Activated T-helper 1 cell treated with anti-CD3 and anti-CD28 coated beads, Interleukin-12 subunit alpha, Interleukin-12 subunit beta, Interleukin-2, Interleukin-4 antibody, amounts not matched to agents 30 ng/mL and 10 ng/mL and 1 ng/mL, durations not matched to agents 14 hours and 24 hours and 36 hours (primary cell): ENCODE measurements at regions of chr11 and their contacts with region 1.

Region 1: DNA sequence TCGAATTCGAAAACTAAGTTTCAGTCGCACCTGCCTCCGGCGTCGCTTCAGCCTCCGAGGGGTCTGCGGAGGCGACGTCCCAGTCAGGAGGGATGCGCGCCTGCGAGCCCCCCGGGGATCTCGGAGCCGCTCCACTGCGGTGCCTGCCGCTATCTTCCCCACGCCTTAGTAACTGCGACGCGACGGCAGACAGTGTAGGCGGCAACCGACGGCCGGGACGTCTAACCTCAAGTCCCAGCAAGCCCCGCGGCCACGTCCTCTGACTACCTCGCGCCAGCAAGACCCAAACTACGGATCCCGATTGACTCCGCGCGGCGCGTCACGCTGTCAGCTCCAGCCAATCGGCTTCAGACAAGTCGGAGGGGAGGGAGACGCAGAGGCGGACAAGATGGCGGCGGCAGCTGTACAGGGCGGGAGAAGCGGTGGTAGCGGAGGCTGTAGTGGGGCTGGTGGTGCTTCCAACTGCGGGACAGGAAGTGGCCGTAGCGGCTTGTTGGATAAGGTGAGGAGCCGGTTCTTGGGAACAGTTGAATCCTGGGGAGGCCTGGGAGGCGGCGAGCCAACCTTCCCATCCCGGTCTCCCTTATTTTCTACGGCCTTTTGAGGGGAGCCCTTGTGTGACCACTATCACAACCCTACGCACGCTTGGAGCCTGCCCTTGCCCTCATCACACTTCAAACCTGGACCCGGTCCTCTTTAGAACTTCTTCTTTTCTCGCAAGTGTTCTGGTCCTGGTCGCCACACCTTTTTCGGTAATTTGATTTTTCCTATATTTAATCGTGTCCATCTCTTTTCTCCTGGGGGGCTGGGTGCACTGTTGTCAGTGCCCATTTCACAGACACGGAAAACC is at the starts of genes SPCS2 and XRRA1:
- DNase-seq: peak; percentile 98
- H3K4me3 Mint-ChIP-seq: peak within 1 kb of the TSS; percentile 96
- H3K27ac Mint-ChIP-seq: peak within 1 kb of the TSS; percentile 96
- H3K4me1 Mint-ChIP-seq: peaks cover 46% of the 10 kb centered on the region
- H3K27me3 Mint-ChIP-seq: no peaks in the 10 kb centered on the region
- total RNA-seq, gene SPCS2: 167 and 172 TPM in 2 replicates
- total RNA-seq, gene XRRA1: 8.6 and 9.0 TPM in 2 replicates

Region 2: GRCh38 chr11:73760679-73761402 is 1188.3 kb before region 1 on chr11 and contains the start of gene RAB6A:
- intact Hi-C with region 1: loop called (anchors 10 kb)
- DNase-seq: peak; percentile 100
- H3K4me3 Mint-ChIP-seq: peak within 1 kb of the TSS; percentile 98
- H3K27ac Mint-ChIP-seq: peak within 1 kb of the TSS; percentile 97
- H3K4me1 Mint-ChIP-seq: peaks cover 41% of the 10 kb centered on the region
- H3K27me3 Mint-ChIP-seq: peaks cover 3% of the 10 kb centered on the region
- total RNA-seq, gene RAB6A: 81.9 and 88.0 TPM in 2 replicates

Region 3: DNA sequence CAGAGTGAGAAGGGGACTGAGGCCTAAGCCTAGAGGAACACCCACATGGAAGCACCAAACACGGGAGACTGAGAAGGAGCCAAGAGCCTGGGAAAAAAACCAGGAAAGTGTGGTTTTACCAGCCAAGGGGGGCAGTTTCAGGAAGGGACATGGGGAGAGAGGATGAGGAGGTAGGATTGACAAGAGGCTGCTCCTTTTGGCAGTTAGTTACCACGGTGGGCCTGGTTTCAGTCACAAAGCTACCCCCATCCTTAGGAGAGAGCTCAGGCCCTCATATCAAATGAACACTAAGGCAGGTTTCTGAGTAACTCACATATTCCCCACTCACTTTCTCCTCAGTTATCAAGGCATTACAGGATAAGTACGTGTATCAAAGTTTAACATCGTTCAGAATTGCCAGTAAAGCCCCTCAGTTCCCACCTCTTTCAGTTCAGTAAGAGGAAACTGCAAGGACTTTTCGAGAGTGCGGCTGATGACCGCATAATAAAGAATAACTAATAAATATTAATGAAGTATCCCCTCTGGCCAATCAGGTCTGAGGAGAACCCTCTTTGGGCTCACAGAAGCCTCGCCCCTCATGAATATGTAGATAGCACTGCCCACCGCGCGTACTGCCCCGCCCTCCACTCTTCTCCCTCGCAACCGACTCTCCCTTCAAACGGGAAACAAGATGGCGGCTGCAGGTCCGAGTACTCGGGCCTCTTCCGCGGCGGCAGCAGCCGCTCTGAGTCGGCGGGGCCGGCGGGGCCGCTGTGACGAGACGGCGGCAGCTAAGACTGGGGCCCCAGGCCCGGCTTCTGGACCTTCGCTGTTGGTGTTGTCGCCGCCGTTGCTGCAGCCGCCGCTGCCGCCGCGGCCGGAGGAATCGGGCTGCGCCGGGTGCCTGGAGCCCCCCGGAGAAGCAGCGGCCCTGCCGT is 200.7 kb before region 1 on chr11 and contains the start of gene RNF169:
- intact Hi-C with region 1: loop called (anchors 1 kb)
- DNase-seq: peak; percentile 85
- H3K4me3 Mint-ChIP-seq: peak within 1 kb of the TSS; percentile 98
- H3K27ac Mint-ChIP-seq: peak within 1 kb of the TSS; percentile 90
- H3K4me1 Mint-ChIP-seq: peaks cover 30% of the 10 kb centered on the region
- H3K27me3 Mint-ChIP-seq: peaks cover 4% of the 10 kb centered on the region
- total RNA-seq, gene RNF169: 14.8 and 15.3 TPM in 2 replicates

Region 4: DNA sequence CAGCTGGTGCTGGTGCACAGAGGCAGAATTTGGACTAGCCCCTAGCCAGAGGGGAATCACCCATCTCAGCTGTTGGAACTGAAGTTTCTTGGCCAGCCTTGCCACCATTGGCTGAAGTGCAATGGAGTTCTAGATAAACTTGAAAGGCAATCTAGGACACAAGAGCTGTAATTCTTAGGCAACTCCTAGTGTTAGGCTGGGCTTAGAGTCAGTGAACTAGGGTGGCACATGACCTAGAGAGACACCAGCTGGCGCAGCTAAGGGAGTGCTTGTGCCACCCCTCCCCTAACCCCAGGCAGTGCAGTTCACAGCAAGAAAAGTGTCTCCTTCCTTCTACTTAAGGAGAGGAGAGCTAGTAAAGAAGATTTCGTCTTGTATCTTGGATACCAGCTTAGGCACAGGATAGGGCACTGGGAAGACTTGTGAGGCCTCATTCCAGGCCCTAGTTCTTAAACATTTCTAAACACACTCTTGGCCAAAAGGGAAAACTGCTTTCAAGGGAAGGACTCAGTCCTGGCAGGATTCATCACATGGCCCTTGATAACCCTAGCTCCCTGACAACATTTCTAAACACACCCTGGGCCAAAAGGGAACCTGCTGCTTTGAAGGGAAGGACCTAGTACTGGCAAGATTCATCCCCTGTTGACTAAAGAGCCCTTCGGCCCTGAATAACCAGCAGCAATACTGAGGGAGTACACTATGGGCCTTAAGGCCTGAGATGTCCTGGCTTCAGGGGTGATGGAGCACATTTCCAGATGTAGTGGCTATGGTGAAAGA is 53.6 kb before region 1 on chr11:
- intact Hi-C with region 1: no loop called
- DNase-seq: no peak
- H3K4me3 Mint-ChIP-seq: no peak overlapping the region
- H3K27ac Mint-ChIP-seq: no peak overlapping the region
- H3K4me1 Mint-ChIP-seq: no peaks in the 10 kb centered on the region
- H3K27me3 Mint-ChIP-seq: no peaks in the 10 kb centered on the region

Region 5: GRCh38 chr11:74971424-74971823 is 22.3 kb after region 1 on chr11:
- intact Hi-C with region 1: loop called (anchors 2 kb)
- DNase-seq: no peak
- H3K4me3 Mint-ChIP-seq: no peak overlapping the region
- H3K27ac Mint-ChIP-seq: no peak overlapping the region
- H3K4me1 Mint-ChIP-seq: peaks cover 9% of the 10 kb centered on the region
- H3K27me3 Mint-ChIP-seq: no peaks in the 10 kb centered on the region

Region 6: DNA sequence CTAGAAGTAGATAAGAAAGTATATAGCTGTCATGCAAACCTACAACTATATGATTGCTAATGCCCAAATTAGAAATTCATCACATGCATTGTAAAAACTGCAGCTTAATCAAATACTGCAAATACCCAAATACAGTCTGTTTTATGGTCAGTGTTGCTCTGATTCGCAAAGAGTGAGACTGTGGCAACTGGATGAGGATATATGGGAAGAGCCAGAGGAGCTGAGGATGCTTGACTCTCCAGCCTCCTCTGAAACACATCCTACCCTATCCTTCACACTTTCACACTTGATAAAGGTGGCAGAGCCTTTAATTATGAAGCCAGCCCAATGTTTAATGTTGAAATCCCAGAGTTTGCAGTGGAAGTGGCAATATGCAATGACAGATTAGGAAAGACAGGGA is 169.5 kb after region 1 on chr11:
- intact Hi-C with region 1: no loop called
- DNase-seq: no peak
- H3K4me3 Mint-ChIP-seq: no peak overlapping the region
- H3K27ac Mint-ChIP-seq: no peak overlapping the region
- H3K4me1 Mint-ChIP-seq: no peaks in the 10 kb centered on the region
- H3K27me3 Mint-ChIP-seq: peaks cover 6% of the 10 kb centered on the region

Region 7: DNA sequence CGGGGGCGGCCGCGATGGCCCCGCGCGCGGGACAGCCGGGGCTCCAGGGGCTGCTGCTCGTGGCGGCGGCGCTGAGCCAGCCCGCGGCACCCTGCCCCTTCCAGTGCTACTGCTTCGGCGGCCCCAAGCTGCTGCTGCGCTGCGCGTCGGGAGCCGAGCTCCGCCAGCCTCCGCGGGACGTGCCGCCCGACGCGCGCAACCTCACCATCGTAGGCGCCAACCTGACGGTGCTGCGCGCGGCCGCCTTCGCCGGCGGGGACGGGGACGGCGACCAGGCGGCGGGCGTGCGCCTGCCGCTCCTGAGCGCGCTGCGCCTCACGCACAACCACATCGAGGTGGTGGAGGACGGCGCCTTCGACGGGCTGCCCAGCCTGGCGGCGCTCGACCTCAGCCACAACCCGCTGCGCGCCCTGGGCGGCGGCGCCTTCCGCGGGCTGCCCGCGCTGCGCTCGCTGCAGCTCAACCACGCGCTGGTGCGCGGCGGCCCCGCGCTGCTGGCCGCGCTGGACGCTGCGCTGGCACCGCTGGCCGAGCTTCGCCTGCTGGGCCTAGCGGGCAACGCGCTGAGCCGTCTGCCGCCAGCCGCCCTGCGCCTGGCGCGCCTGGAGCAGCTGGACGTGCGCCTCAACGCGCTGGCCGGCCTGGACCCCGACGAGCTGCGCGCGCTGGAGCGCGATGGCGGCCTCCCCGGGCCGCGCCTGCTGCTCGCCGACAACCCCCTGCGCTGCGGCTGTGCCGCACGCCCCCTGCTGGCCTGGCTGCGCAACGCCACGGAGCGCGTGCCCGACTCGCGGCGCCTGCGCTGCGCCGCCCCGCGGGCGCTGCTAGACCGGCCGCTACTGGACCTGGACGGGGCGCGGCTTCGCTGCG is 292.1 kb after region 1 on chr11:
- intact Hi-C with region 1: loop called (anchors 5 kb)
- DNase-seq: peak; percentile 89
- H3K4me3 Mint-ChIP-seq: peak overlapping the region; percentile 58
- H3K27ac Mint-ChIP-seq: no peak overlapping the region
- H3K4me1 Mint-ChIP-seq: peaks cover 6% of the 10 kb centered on the region
- H3K27me3 Mint-ChIP-seq: peaks cover 52% of the 10 kb centered on the region